Ascending aorta (tissue), 2 donors: ENCODE measurements at regions of chr1 and their contacts with region 1.

Region 1: GRCh38 chr1:27525296-27526272 is 35.6 kb upstream of the WASF2 start:
- DNase-seq: peak in 1 of 2 donors; percentile 80
- H3K4me3 ChIP-seq: peak overlapping the region in 1 of 2 donors; percentile 10
- H3K27ac ChIP-seq: peak overlapping the region; percentile 59 to 81
- H3K4me1 ChIP-seq: peaks cover 35 to 58% of the 10 kb centered on the region in 2 donors
- H3K27me3 ChIP-seq: no peaks in the 10 kb centered on the region
- CTCF ChIP-seq: no peak

Region 2: GRCh38 chr1:27568300-27569087 is 42.9 kb after region 1 on chr1:
- intact Hi-C with region 1: loop called (anchors 1 kb)
- DNase-seq: peak; percentile 94 to 98
- H3K4me3 ChIP-seq: peak overlapping the region; percentile 42 to 55
- H3K27ac ChIP-seq: peak overlapping the region; percentile 94 to 96
- H3K4me1 ChIP-seq: peaks cover 68 to 97% of the 10 kb centered on the region in 2 donors
- H3K27me3 ChIP-seq: no peaks in the 10 kb centered on the region
- CTCF ChIP-seq: peak; percentile 32 to 81 (median 62)

Region 3: DNA sequence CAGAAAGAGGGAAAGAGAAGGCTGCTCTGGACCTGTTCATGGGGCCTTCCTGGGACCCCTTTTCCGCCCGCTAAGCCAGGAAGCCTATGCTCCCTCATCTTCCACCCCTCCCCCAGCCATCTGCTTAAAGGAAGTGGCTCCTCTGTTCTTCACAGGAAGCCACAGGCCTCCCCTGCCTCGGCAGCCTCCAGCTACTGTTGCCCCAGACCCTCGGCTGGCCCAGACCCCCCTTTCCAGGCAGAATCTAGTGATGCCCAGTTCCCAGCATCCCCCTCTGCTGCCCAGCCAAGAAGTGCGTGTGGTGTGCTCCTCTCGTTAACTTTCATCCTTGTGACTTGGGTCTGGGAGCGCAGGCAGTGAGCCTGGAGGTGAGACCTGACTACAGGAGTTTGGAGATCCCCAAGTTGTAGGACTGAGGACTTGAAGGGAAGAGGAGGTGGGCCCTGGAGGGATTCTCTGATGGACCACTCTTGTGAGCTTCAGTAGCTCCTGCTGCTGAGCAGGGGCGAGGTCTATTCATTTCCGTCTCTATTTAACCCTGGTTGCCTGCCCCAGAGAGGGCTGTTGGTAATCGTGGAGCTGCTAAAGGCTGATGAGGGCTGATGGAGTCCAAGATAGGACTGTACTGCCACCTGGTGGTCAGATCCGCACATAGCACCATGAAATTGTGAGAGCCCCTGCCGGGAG is 137.3 kb after region 1 on chr1:
- intact Hi-C with region 1: no loop called
- DNase-seq: peak; percentile 39 to 93
- H3K4me3 ChIP-seq: no peak overlapping the region
- H3K27ac ChIP-seq: peak overlapping the region; percentile 35 to 39
- H3K4me1 ChIP-seq: peaks cover 4 to 20% of the 10 kb centered on the region in 2 donors
- H3K27me3 ChIP-seq: no peaks in the 10 kb centered on the region
- CTCF ChIP-seq: peak; percentile 83 to 97 (median 83)